Activated naive CD4-positive, alpha-beta T cell treated with anti-CD3 and anti-CD28 coated beads for 36 hours (primary cell): ENCODE measurements at regions of chr3 and their contacts with region 1.

Region 1: GRCh38 chr3:184289426-184289938 is 9.6 kb upstream of the PSMD2 start:
- DNase-seq: peak; percentile 79
- H3K4me3 Mint-ChIP-seq: no peak overlapping the region
- H3K27ac Mint-ChIP-seq: no peak overlapping the region
- H3K4me1 Mint-ChIP-seq: no peaks in the 10 kb centered on the region
- H3K27me3 Mint-ChIP-seq: peaks cover 4% of the 10 kb centered on the region

Region 2: DNA sequence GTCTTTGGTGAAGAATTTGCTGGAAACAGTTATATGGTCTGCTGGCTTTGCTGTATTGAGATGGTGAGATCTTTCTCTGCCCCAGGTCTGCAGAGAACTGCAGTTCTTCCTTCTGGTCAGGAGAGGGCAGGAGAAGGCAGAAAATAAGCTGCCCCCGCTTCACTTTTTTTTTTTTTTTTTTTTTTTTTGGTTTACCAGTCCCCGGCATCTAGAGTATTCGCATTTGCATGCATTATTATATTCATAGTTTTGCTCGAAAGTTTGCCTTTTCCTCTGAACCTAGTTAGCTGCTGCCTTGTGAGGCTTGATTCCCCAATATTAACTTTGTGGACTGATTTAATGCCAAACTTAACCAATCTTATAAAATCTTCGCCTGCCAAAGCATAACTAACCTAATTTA is 394.2 kb before region 1 on chr3:
- CTCF ChIA-PET with region 1: interaction called, 4 read pairs
- intact Hi-C with region 1: loop called (anchors 1 kb)
- DNase-seq: peak; percentile 41
- H3K4me3 Mint-ChIP-seq: no peak overlapping the region
- H3K27ac Mint-ChIP-seq: no peak overlapping the region
- H3K4me1 Mint-ChIP-seq: peaks cover 3% of the 10 kb centered on the region
- H3K27me3 Mint-ChIP-seq: no peaks in the 10 kb centered on the region

Region 3: DNA sequence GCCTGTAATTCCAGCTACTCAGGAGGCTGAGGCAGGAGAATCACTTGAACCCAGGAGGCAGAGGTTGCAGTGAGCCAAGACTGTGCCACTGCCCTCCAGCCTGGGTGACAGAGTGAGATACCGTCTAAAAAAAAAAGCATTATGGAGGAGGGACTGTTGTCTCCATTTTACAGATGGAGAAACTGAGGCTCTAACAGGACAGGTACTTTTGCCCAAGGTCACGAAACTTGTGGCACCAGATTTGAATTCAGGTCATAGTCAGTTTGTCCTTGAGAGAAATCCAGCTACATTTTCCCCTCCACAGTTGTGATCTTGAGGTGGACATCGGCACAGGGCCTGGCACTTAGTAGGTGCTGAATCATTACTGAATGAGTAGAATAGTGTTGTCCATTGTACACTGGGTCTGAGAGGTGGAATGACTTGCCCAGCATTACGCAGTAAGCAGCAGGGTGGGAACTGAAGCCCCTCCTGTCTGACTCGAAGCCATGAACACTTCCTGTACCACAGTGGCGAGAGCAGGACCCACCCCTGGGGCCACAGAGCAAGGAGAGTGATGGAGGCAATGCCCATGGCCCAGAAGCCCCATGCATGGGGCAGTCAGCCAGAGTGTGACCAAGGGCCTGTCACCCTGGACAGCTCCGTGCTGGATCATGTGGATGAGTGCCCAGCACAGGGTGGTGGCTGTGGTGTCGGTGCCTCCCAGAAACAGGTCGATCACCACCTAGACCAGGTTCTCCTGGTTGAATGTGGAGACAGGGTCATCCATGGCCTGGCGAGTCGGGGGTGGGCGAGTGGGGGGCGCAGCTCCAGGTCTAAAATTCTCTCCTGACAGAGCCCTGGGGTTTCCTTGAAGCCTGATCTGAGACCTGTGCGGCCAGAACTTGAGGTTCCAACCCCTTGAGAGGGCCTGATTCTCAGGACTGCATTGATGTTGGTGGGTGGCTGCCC is 384.4 kb before region 1 on chr3:
- CTCF ChIA-PET with region 1: interaction called, 3 read pairs
- intact Hi-C with region 1: loop called (anchors 2 kb)
- DNase-seq: no peak
- H3K4me3 Mint-ChIP-seq: no peak overlapping the region
- H3K27ac Mint-ChIP-seq: no peak overlapping the region
- H3K4me1 Mint-ChIP-seq: no peaks in the 10 kb centered on the region
- H3K27me3 Mint-ChIP-seq: no peaks in the 10 kb centered on the region

Region 4: DNA sequence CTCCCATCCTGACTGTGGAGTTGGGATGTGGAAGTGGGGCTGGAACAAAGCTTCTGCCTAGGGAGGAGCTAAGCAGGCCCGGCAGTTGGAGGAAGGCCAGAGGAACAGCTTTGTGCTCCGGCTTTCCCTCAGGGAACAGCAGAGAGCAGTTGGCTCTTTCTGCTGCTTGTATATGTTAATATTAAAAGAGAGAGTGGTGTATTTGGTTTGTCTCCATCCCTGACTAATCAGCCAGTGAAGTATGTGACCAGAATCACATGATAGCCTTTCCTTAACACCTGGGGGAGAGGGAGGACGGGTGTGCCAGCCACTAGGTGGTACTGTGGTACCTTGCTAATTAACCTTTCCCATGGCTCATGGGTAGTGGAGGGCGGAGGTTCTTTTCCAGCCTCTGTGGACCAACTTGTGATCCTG is 144.4 kb before region 1 on chr3:
- CTCF ChIA-PET with region 1: no interaction called
- intact Hi-C with region 1: loop called (anchors 1 kb)
- DNase-seq: peak; percentile 55
- H3K4me3 Mint-ChIP-seq: no peak overlapping the region
- H3K27ac Mint-ChIP-seq: no peak overlapping the region
- H3K4me1 Mint-ChIP-seq: peaks cover 2% of the 10 kb centered on the region
- H3K27me3 Mint-ChIP-seq: no peaks in the 10 kb centered on the region